ENCODE measurements at regions of chr3 and their contacts with region 1.

Region 1: GRCh38 chr3:67113802-67114407 is 115.8 kb downstream of the KBTBD8 start:
- DNase-seq: peak; percentile 35 to 63
- H3K4me3 ChIP-seq: no peak overlapping the region
- H3K27ac ChIP-seq: no peak overlapping the region
- H3K4me1 ChIP-seq: no peaks in the 10 kb centered on the region
- H3K27me3 ChIP-seq: no peaks in the 10 kb centered on the region
- CTCF ChIP-seq: peak; percentile 85

Region 2: DNA sequence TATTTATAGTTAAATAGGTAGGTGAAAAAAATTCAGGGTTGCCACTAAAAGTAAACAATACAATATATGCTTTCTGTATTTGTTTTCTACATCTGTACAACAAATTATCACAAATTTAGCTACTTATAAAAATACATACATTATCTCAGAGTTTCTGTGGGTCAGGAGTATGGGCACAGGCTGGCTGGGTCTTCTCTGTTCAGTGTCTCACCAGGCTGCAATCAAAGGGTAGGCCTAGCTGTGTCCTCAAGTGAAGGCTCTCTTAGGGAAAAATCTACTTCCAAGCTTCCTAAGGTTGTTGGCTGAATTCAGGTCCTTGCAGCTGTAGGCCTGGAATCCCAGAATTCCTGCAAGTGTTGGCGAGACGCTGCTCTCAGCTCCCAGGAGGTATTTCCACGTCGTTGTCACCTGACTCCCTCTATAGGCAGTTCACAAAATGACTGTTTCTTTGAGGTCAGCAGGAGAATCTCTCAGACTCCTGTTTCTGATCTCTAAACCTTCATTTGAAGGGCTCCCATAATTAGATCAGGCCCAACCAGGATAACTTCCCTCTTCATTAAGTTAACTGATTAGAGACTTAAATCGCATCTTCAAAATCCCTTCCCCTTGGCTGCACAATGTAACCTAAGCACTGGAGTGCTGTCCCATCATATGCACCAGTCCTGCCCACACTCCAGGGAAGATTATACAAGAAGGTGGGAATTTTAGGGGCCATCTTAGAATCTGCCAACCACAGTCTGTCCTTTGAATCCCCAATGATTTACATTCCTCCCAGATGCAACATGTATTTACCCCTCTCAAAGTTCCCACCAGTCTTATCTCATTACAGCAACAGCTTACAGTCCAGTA is 243.9 kb after region 1 on chr3:
- CTCF ChIA-PET with region 1: no interaction called
- POLR2A ChIA-PET with region 1: no interaction called
- intact Hi-C with region 1: loop called (anchors 5 kb)
- DNase-seq: no peak
- H3K4me3 ChIP-seq: no peak overlapping the region
- H3K27ac ChIP-seq: no peak overlapping the region
- H3K4me1 ChIP-seq: 0 out of 2 replicates have a peak, but pooled peaks cover under 1% of the 10 kb centered on the region
- H3K27me3 ChIP-seq: no peaks in the 10 kb centered on the region
- CTCF ChIP-seq: no peak; the same call in 1 of the 2 replicates

Measured in PC-9 (cell line).